ENCODE measurements at regions of chr20 and their contacts with region 1.

Region 1: GRCh38 chr20:35437491-35437998 is 483 bp downstream of the GDF5 start:
- DNase-seq: no peak
- ATAC-seq: no peak
- H3K4me3 Mint-ChIP-seq: no peak overlapping the region
- H3K27ac Mint-ChIP-seq: no peak overlapping the region
- H3K4me1 Mint-ChIP-seq: peaks cover 34% of the 10 kb centered on the region
- H3K27me3 Mint-ChIP-seq: no peaks in the 10 kb centered on the region; the same call in 1 of the 2 replicates
- CTCF ChIP-seq: no peak

Region 2: DNA sequence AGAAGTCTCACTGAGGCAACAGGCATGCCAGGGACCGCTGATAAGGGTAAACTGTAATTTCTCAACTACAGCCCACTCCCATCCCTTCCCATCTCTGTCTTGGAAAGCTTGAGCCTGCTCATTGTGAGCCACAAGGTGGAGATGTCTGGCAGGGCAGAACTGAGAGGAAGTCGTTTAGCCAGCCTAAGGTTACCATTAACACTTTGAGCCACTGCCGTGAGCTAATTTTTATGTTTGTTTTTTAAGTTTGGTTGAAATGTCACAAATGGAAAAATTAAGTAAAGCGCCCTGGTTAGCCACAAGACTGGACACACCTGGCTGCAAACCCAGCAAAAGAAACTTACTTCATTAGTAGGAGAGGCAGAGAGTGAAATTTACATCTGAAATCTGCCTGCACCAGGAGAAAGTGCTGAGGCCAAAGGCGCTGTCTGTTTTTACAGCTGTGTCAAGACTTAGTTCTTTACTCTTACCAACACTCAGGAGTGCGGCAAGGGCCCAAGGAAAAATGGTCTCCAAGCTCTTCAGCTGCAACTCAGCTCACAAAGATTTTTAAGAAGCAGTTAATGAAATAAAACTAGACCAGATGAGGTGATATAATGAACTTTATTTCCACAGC is 95.3 kb before region 1 on chr20:
- CTCF ChIA-PET with region 1: interaction called, 28 read pairs
- POLR2A ChIA-PET with region 1: interaction called, 4 read pairs
- DNase-seq: peak; percentile 18
- ATAC-seq: peak; percentile 94
- H3K4me3 Mint-ChIP-seq: no peak overlapping the region
- H3K27ac Mint-ChIP-seq: peak overlapping the region; percentile 57
- H3K4me1 Mint-ChIP-seq: peaks cover 5% of the 10 kb centered on the region; the same call in 1 of the 2 replicates
- H3K27me3 Mint-ChIP-seq: no peaks in the 10 kb centered on the region
- CTCF ChIP-seq: no peak

Measured in WTC11 (cell line).